ENCODE measurements at regions of chr17 and their contacts with region 1.

Region 1: DNA sequence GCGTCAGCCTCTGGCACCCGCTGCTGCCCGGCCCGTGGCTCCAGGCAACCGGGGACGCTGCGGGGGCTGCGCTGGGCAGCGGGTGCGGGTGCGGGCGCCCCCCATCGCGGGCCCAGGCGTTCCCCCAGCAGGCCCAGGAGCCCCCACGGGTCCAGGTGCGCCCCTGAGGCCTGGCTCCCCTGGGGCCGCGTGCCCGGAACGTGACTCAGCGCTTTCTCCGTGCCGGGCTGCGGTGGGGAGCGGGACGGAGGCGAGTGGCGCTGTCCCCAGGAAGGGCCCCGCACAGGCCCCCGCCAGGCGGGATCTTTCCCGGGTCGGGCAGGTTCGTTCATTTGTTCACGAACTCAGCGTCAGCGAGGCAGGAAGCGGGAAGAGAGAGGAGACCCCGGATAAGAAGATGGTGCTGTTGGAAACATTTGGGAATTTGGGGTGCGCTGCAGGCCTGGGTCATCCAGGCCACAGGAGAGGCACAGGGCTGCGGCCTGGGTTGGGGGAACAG is 18.4 kb upstream of the EXOC7 start:
- DNase-seq: no peak
- ATAC-seq: no peak
- H3K4me3 ChIP-seq: no peak overlapping the region
- H3K27ac ChIP-seq: no peak overlapping the region
- H3K4me1 ChIP-seq: peaks cover 28% of the 10 kb centered on the region
- H3K27me3 ChIP-seq: peaks cover 0 to 13% of the 10 kb centered on the region in 2 experiments; a peak in 3 of 5 replicates
- CTCF ChIP-seq: no peak
- EP300 ChIP-seq: no peak
- POLR2A ChIP-seq: no peak
- RAD21 ChIP-seq: no peak

Region 2: GRCh38 chr17:76091526-76092285 is 30.3 kb before region 1 on chr17:
- CTCF ChIA-PET with region 1: no interaction called
- POLR2A ChIA-PET with region 1: no interaction called
- in situ Hi-C with region 1: no loop called
- intact Hi-C with region 1: no loop called
- DNase-seq: no peak
- ATAC-seq: no peak
- H3K4me3 ChIP-seq: no peak overlapping the region
- H3K27ac ChIP-seq: no peak overlapping the region
- H3K4me1 ChIP-seq: no peaks in the 10 kb centered on the region
- H3K27me3 ChIP-seq: no peaks in the 10 kb centered on the region
- CTCF ChIP-seq: no peak
- EP300 ChIP-seq: no peak
- POLR2A ChIP-seq: no peak
- RAD21 ChIP-seq: no peak

Region 3: DNA sequence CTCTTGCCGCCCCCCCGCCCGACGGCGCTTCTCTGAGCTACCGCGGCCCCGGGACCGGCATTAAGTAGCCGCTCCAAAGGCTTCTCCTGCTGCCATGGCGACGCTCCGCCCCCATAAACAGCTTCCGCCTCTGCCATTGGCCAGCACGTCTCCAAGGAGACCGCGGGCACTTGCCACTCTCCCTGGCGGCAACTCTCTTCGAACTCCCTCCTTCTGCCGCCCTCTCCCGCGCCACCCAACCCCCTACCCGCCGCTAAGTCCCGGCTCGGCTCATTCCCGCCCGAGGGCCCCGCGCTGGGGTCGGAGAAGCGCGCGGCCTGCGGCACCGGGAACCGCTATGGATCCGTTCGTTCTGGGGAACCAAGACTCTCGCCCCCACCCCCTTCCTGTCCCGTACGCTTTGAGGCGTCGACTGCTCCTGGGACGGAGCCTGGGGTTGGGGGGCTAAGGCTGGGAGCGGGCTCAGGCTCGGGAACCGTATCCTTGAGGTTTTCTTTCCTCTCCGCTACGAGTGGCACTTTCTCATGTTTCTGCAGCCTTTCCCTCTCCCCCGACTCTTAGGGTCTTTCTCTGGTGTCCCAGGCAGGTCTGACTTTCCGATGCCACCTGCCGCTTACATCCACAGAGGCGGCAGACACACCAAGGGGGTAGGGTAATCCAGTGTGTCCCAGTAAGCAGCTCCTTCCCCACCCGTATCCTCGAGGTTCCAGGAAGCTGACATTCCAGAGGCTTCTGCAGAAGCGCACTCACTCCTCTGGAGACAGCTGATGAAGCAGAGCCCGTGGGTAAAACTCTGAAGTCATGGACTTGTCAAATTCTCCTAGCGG is 19.4 kb after region 1 on chr17 and contains the start of gene FOXJ1:
- CTCF ChIA-PET with region 1: interaction called, 50 read pairs
- POLR2A ChIA-PET with region 1: interaction called, 14 read pairs
- in situ Hi-C with region 1: no loop called
- intact Hi-C with region 1: no loop called
- DNase-seq: peak; percentile 92
- ATAC-seq: peak; percentile 61
- H3K4me3 ChIP-seq: peak within 1 kb of the TSS; percentile 54 to 71 (median 56); a peak in 5 of 6 replicates
- H3K27ac ChIP-seq: no peak within 1 kb of the TSS
- H3K4me1 ChIP-seq: peaks cover 80% of the 10 kb centered on the region
- H3K27me3 ChIP-seq: peaks cover 3 to 31% of the 10 kb centered on the region in 2 experiments
- CTCF ChIP-seq: 0 out of 2 replicates have a peak, but pooled peaks have one; percentile 28
- EP300 ChIP-seq: no peak
- POLR2A ChIP-seq: no peak
- RAD21 ChIP-seq: 0 out of 2 replicates have a peak, but pooled peaks have one; percentile 31
- total RNA-seq, gene FOXJ1: 1.4 and 1.6 TPM in 2 replicates

Region 4: GRCh38 chr17:76147211-76148014 is 25.4 kb after region 1 on chr17:
- CTCF ChIA-PET with region 1: interaction called, 50 read pairs
- POLR2A ChIA-PET with region 1: interaction called, 4 read pairs
- in situ Hi-C with region 1: no loop called
- intact Hi-C with region 1: no loop called
- DNase-seq: peak; percentile 45
- ATAC-seq: no peak
- H3K4me3 ChIP-seq: no peak overlapping the region
- H3K27ac ChIP-seq: no peak overlapping the region
- H3K4me1 ChIP-seq: peaks cover 32% of the 10 kb centered on the region
- H3K27me3 ChIP-seq: peaks cover 0 to 26% of the 10 kb centered on the region in 2 experiments
- CTCF ChIP-seq: peak; percentile 69
- EP300 ChIP-seq: no peak
- POLR2A ChIP-seq: no peak
- RAD21 ChIP-seq: peak; percentile 50; the same call in 1 of the 2 replicates

Region 5: GRCh38 chr17:76153640-76154039 is 31.7 kb after region 1 on chr17:
- CTCF ChIA-PET with region 1: interaction called, 20 read pairs
- POLR2A ChIA-PET with region 1: interaction called, 4 read pairs
- in situ Hi-C with region 1: loop called (anchors 5 kb)
- intact Hi-C with region 1: loop called (anchors 1 kb)
- DNase-seq: peak; percentile 58
- ATAC-seq: peak; percentile 71
- H3K4me3 ChIP-seq: no peak overlapping the region
- H3K27ac ChIP-seq: no peak overlapping the region
- H3K4me1 ChIP-seq: peaks cover 11% of the 10 kb centered on the region
- H3K27me3 ChIP-seq: peaks cover 0 to 17% of the 10 kb centered on the region in 2 experiments; a peak in 3 of 5 replicates
- CTCF ChIP-seq: peak; percentile 66
- EP300 ChIP-seq: no peak
- POLR2A ChIP-seq: no peak
- RAD21 ChIP-seq: peak; percentile 57

Region 6: GRCh38 chr17:76182016-76182764 is 60.2 kb after region 1 on chr17:
- CTCF ChIA-PET with region 1: interaction called, 78 read pairs
- POLR2A ChIA-PET with region 1: interaction called, 9 read pairs
- in situ Hi-C with region 1: no loop called
- intact Hi-C with region 1: loop called (anchors 1 kb)
- DNase-seq: peak; percentile 89
- ATAC-seq: peak; percentile 89
- H3K4me3 ChIP-seq: no peak overlapping the region
- H3K27ac ChIP-seq: no peak overlapping the region
- H3K4me1 ChIP-seq: peaks cover 37% of the 10 kb centered on the region
- H3K27me3 ChIP-seq: peaks cover 0 to 1% of the 10 kb centered on the region in 2 experiments; a peak in 1 of 5 replicates
- CTCF ChIP-seq: peak; percentile 99
- EP300 ChIP-seq: peak in 1 of 2 experiments; percentile 21; a peak in 1 of 4 replicates
- POLR2A ChIP-seq: no peak
- RAD21 ChIP-seq: peak; percentile 90

Region 7: GRCh38 chr17:76278952-76279741 is 157.2 kb after region 1 on chr17:
- CTCF ChIA-PET with region 1: interaction called, 35 read pairs
- POLR2A ChIA-PET with region 1: interaction called, 3 read pairs
- in situ Hi-C with region 1: loop called (anchors 5 kb)
- intact Hi-C with region 1: loop called (anchors 1 kb)
- DNase-seq: peak; percentile 74
- ATAC-seq: peak; percentile 87
- H3K4me3 ChIP-seq: no peak overlapping the region
- H3K27ac ChIP-seq: no peak overlapping the region
- H3K4me1 ChIP-seq: peaks cover 25% of the 10 kb centered on the region
- H3K27me3 ChIP-seq: no peaks in the 10 kb centered on the region
- CTCF ChIP-seq: peak; percentile 98
- EP300 ChIP-seq: no peak
- POLR2A ChIP-seq: no peak
- RAD21 ChIP-seq: peak; percentile 98